Heart left ventricle (tissue), 16 donors: ENCODE measurements at regions of chr13 and their contacts with region 1.

Region 1: DNA sequence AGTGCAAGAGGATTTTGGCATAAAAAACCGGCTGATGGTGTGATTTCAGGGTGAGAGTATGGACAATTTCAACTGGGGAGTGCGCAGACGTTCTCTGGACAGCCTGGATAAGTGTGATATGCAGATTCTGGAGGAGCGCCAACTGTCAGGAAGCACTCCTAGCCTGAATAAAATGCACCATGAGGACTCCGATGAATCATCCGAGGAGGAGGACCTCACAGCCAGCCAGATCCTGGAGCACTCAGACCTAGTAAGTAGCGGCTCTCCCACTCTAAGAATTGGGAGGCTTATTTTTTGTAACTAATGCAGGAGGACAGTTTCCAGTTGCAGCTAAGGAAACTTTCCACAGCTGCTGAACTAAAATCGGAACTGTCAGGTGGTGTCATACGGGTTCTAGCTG is 53.6 kb downstream of the ZAR1L start:
- DNase-seq: peak; percentile 76 to 92 (median 89)
- ATAC-seq: peak; percentile 83 to 94 (median 92)
- H3K4me3 ChIP-seq: peak overlapping the region in 3 of 12 donors; percentile 6 to 23 (median 10)
- H3K27ac ChIP-seq: peak overlapping the region; percentile 62 to 84 (median 76)
- H3K4me1 ChIP-seq: peaks cover 9 to 89% (median 58%) of the 10 kb centered on the region in 12 donors
- H3K27me3 ChIP-seq: no peaks in the 10 kb centered on the region
- CTCF ChIP-seq: no peak
- POLR2A ChIP-seq: peak in 1 of 2 donors; percentile 38

Region 2: GRCh38 chr13:31870511-31870910 is 391.1 kb before region 1 on chr13:
- intact Hi-C with region 1: no loop called
- DNase-seq: no peak
- ATAC-seq: peak in 1 of 4 donors; percentile 45
- H3K4me3 ChIP-seq: no peak overlapping the region
- H3K27ac ChIP-seq: peak overlapping the region in 1 of 12 donors; percentile 14
- H3K4me1 ChIP-seq: peaks cover 0 to 67% (median 33%) of the 10 kb centered on the region in 12 donors
- H3K27me3 ChIP-seq: no peaks in the 10 kb centered on the region
- CTCF ChIP-seq: no peak
- POLR2A ChIP-seq: no peak

Region 3: DNA sequence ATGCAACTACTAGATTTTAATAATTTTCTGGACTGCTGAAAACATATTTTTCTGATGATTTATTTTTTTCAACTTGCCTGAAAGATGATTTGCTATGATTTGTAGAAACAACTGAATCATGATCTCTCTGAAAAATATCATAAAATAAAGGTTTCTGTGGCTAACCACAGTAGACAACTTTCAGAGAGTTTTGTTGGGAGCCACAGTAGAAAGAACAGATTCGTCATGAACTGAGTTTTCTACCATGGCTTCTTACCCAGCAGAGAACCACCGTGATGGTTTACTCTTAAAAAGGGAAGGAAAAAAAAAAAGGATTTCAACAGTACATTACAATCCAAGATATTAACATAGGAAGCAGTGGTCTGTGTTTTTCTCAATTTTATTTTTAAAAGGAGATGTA is 35.6 kb after region 1 on chr13:
- intact Hi-C with region 1: loop called in 1 of 10 experiments (anchors 5 kb)
- DNase-seq: no peak
- ATAC-seq: no peak
- H3K4me3 ChIP-seq: no peak overlapping the region
- H3K27ac ChIP-seq: no peak overlapping the region
- H3K4me1 ChIP-seq: peaks cover 0 to 11% (median 0%) of the 10 kb centered on the region in 12 donors
- H3K27me3 ChIP-seq: no peaks in the 10 kb centered on the region
- CTCF ChIP-seq: no peak
- POLR2A ChIP-seq: no peak